ENCODE measurements at regions of chr2 and their contacts with region 1.

Region 1: GRCh38 chr2:165794536-165794928 is 485 bp upstream of the GALNT3 start:
- DNase-seq: peak; percentile 89
- ATAC-seq: peak; percentile 86
- H3K4me3 ChIP-seq: peak overlapping the region; percentile 71 to 91 (median 84)
- H3K4me3 Mint-ChIP-seq: peak overlapping the region; percentile 95
- H3K27ac ChIP-seq: peak overlapping the region; percentile 90 to 91
- H3K27ac Mint-ChIP-seq: peak overlapping the region; percentile 97
- H3K4me1 ChIP-seq: peaks cover 16 to 22% of the 10 kb centered on the region in 2 donors
- H3K4me1 Mint-ChIP-seq: peaks cover 42% of the 10 kb centered on the region
- H3K27me3 ChIP-seq: no peaks in the 10 kb centered on the region
- H3K27me3 Mint-ChIP-seq: no peaks in the 10 kb centered on the region
- CTCF ChIP-seq: no peak

Region 2: GRCh38 chr2:165743442-165743841 is 51.1 kb before region 1 on chr2:
- CTCF ChIA-PET with region 1: no interaction called
- POLR2A ChIA-PET with region 1: no interaction called
- intact Hi-C with region 1: loop called (anchors 5 kb)
- DNase-seq: peak; percentile 72
- ATAC-seq: peak; percentile 94
- H3K4me3 ChIP-seq: no peak overlapping the region
- H3K4me3 Mint-ChIP-seq: no peak overlapping the region
- H3K27ac ChIP-seq: peak overlapping the region in 1 of 2 donors; percentile 35
- H3K27ac Mint-ChIP-seq: peak overlapping the region; percentile 0
- H3K4me1 ChIP-seq: peaks cover 7 to 9% of the 10 kb centered on the region in 2 donors
- H3K4me1 Mint-ChIP-seq: peaks cover 13% of the 10 kb centered on the region
- H3K27me3 ChIP-seq: no peaks in the 10 kb centered on the region
- H3K27me3 Mint-ChIP-seq: no peaks in the 10 kb centered on the region
- CTCF ChIP-seq: no peak

Region 3: DNA sequence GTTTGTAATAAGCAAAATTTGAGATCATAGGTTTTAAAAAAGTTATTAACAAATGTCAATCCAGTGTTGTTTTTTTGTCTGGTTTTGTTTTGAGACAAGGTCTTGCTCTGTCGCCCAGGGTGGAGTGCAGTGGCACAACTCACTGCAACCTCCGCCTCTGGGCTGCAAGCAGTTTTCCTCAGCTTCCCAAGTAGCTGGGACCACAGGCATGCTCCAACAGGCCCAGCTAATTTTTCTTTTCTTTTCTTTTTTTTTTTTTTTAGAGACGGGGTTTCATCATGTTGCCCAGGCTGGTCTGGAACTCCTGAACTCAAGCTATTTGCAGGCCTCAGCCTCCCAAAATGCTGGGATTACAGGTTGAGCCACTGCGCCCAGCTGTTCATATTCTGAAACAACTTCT is 31.8 kb before region 1 on chr2:
- CTCF ChIA-PET with region 1: no interaction called
- POLR2A ChIA-PET with region 1: no interaction called
- intact Hi-C with region 1: no loop called
- DNase-seq: no peak
- ATAC-seq: no peak
- H3K4me3 ChIP-seq: no peak overlapping the region
- H3K4me3 Mint-ChIP-seq: no peak overlapping the region
- H3K27ac ChIP-seq: no peak overlapping the region
- H3K27ac Mint-ChIP-seq: no peak overlapping the region
- H3K4me1 ChIP-seq: no peaks in the 10 kb centered on the region
- H3K4me1 Mint-ChIP-seq: no peaks in the 10 kb centered on the region
- H3K27me3 ChIP-seq: no peaks in the 10 kb centered on the region
- H3K27me3 Mint-ChIP-seq: no peaks in the 10 kb centered on the region
- CTCF ChIP-seq: no peak

Region 4: DNA sequence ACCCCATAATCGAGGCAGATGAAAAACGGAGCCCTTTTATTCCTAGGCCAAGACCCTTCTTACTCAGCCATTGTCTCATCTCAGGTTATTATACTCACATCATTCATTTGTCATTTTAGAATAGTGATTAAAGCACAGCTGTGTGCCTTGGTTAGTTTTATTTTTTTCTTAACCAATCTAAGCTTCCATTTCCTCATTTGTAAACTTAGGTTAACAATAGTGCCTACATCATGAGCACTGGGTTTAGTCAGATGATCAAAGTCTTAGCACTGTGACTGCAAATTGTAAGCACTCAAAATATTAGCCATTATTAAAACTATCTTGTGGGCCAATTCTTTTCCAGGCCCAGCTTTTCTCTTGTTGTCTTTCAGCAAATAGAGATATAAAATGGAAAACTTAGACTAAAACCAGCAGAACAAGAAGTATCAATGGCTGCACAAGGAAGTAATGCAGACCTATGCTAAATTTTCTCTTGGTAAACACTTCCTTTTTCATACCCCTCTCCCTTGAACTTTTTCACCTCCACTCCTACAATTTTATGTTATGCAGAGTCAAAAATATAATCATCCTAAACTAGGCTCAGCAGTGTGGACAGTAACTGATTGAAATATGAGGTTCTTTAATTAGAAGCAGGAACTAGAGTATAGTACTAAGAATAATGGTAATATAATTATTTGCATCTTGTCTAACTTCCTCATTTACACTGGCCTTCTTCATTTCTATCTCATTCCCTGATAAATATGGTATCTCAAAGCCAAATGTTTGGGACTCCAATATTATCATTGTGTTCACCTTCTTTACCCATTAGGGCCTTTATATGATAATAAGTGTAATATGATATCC is 21.0 kb after region 1 on chr2:
- CTCF ChIA-PET with region 1: interaction called, 3 read pairs
- POLR2A ChIA-PET with region 1: no interaction called
- intact Hi-C with region 1: loop called (anchors 1 kb)
- DNase-seq: peak; percentile 71
- ATAC-seq: peak; percentile 78
- H3K4me3 ChIP-seq: peak overlapping the region in 1 of 5 experiments; percentile 48
- H3K4me3 Mint-ChIP-seq: peak overlapping the region; percentile 71
- H3K27ac ChIP-seq: peak overlapping the region; percentile 79 to 81
- H3K27ac Mint-ChIP-seq: peak overlapping the region; percentile 86
- H3K4me1 ChIP-seq: peaks cover 59 to 60% of the 10 kb centered on the region in 2 donors
- H3K4me1 Mint-ChIP-seq: peaks cover 54% of the 10 kb centered on the region
- H3K27me3 ChIP-seq: no peaks in the 10 kb centered on the region
- H3K27me3 Mint-ChIP-seq: no peaks in the 10 kb centered on the region
- CTCF ChIP-seq: no peak

Region 5: DNA sequence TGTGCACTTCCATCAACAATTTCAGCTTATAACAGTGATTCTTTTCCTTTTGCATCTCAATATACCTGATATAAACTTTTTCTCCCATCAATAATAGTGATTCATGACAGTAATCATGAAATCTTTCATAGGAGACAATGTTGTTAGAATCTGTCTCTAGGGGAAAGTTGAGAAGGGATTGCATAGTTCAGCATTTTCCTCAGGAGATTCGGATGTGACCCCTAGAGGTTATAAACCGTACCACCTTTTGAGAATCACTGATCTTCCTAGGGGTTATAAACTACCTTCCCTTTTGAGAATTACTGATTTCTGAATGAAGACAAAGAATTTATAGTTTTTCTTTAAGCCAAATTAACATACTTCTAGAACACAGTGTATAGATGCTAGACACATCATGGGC is 52.5 kb after region 1 on chr2:
- CTCF ChIA-PET with region 1: no interaction called
- POLR2A ChIA-PET with region 1: no interaction called
- intact Hi-C with region 1: loop called (anchors 10 kb)
- DNase-seq: peak; percentile 18
- ATAC-seq: no peak
- H3K4me3 ChIP-seq: no peak overlapping the region
- H3K4me3 Mint-ChIP-seq: no peak overlapping the region
- H3K27ac ChIP-seq: no peak overlapping the region
- H3K27ac Mint-ChIP-seq: no peak overlapping the region
- H3K4me1 ChIP-seq: no peaks in the 10 kb centered on the region
- H3K4me1 Mint-ChIP-seq: no peaks in the 10 kb centered on the region
- H3K27me3 ChIP-seq: no peaks in the 10 kb centered on the region
- H3K27me3 Mint-ChIP-seq: no peaks in the 10 kb centered on the region
- CTCF ChIP-seq: peak; percentile 18

Region 6: DNA sequence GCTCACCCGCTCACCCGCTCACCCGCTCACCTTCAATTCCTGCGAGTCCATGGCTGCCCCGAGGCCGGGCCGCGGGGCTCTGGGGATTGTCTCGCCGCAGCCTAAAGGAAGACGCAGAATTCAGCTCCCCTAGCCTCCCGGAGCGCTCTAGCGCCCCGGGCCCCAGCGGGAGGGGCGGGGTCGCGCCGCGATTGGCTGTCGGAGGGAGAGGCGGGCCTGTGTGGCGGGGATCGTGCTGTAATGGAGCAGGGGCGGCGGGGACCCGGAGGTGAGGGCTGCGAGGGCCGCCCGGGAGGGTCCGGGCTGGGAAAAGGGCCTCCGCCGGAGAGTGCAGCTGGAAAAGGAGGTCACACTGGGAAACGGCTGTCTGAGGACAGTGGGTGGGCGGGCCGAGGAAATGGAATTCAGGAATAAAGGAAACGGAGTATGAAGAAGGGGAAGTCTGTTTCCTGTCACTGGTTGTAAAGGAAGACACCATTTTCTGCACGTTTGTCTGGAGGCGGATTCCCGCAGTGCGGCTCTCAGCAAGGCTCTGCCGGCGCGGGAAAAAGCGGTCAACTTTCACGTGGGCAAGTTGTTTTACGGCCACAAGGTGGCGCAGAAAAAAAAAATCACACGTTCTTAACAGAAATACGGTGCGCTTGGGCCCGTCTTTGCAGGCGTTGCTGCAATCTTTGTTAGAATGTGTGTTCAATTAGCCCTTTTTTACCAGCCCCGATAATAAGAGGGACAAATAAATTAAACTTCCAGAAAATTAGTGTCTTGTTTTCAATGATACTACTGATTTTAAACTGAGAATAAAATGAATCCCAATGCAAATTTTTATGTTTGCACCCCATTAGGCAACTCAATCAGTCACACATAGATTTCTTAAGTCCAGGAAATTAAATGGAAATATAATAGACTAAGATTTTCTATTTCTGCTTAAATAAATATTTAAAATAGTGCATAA is 159.4 kb after region 1 on chr2 and contains the start of gene TTC21B:
- CTCF ChIA-PET with region 1: no interaction called
- POLR2A ChIA-PET with region 1: no interaction called
- intact Hi-C with region 1: loop called (anchors 1 kb)
- DNase-seq: peak; percentile 93
- ATAC-seq: peak; percentile 96
- H3K4me3 ChIP-seq: peak within 1 kb of the TSS; percentile 62 to 82 (median 71)
- H3K4me3 Mint-ChIP-seq: peak within 1 kb of the TSS; percentile 53
- H3K27ac ChIP-seq: peak within 1 kb of the TSS; percentile 77
- H3K27ac Mint-ChIP-seq: no peak within 1 kb of the TSS
- H3K4me1 ChIP-seq: peaks cover 19 to 23% of the 10 kb centered on the region in 2 donors
- H3K4me1 Mint-ChIP-seq: peaks cover 12% of the 10 kb centered on the region
- H3K27me3 ChIP-seq: no peaks in the 10 kb centered on the region
- H3K27me3 Mint-ChIP-seq: no peaks in the 10 kb centered on the region
- CTCF ChIP-seq: peak; percentile 90
- total RNA-seq, gene TTC21B: 41.5 and 50.7 TPM in 2 replicates

Measured in B cell (primary cell).